Left colon (tissue), 2 donors: ENCODE measurements at regions of chr13 and their contacts with region 1.

Region 1: DNA sequence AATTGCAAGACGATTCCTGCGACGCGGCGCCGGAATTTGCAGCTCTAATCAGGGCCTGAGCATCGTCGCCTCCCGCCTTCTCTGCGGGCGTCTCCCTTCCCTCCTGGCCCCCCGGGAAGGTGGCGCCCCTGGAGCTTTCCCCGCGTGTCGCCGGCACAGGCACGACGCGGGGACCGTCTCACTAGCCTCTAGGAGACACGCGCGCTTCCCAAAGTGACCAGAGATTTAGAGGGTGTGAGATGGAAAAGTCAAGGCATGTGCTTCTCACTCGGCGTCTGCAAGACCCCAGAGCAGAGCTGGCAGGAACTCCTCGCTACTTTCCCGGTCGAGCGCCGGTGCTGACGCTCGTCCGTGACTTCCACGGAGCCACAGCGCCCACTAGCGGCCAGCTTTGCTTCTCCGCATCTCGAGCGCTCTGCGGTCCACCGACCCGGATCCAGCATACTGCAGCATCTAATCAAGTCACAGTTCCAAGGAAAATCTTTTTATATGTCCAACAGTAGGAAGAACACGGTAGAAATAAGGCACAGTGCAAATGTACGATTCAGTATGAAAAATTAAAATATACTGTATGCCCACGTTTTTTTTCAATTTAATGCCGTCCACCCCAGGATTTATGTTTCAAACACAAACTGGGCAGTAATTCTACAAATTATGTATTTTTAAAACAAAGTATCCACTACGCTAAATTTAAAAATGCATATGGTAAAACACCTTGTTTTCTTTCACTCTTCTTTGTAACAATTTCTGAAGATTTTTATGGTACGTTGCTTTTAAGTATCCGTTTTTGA is 977 bp upstream of the EFNB2 start:
- DNase-seq: peak; percentile 84 to 97
- ATAC-seq: peak; percentile 56

Region 2: DNA sequence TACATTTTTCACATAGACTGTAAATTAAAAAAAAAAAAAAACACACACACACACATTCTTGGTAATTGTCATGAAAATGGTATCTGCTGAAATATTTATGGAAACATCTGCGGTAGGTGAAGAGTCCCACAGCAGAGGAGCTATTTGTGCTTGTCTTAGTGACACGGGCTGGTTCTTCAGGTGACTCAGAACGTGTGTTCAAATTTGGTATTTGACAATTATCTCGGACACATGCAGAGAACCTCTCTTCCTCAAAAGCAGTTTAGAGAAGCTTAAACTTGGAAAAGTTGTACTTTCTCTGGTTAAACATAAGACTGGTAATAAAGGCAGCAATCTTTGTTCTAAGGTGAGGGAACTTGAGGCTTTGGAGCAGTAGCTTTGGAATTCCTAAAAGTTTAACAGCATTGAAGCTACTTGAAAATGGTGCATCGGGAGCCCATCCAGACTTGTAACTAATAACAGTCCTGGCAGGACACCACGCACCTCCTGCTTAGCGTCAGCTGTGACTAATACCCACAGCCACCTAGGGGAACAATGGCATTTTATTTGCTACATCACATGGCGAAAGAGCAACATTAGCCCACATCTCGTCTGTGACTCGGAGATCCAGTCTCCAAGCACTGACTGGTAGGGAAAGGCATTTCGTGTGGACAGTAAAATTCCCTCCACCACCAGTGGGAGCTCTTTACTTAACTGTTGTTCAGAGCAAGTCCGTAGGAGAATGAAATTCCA is 1965.1 kb before region 1 on chr13:
- intact Hi-C with region 1: loop called in 1 of 2 experiments (anchors 10 kb)
- DNase-seq: peak; percentile 62 to 69
- ATAC-seq: peak; percentile 93

Region 3: DNA sequence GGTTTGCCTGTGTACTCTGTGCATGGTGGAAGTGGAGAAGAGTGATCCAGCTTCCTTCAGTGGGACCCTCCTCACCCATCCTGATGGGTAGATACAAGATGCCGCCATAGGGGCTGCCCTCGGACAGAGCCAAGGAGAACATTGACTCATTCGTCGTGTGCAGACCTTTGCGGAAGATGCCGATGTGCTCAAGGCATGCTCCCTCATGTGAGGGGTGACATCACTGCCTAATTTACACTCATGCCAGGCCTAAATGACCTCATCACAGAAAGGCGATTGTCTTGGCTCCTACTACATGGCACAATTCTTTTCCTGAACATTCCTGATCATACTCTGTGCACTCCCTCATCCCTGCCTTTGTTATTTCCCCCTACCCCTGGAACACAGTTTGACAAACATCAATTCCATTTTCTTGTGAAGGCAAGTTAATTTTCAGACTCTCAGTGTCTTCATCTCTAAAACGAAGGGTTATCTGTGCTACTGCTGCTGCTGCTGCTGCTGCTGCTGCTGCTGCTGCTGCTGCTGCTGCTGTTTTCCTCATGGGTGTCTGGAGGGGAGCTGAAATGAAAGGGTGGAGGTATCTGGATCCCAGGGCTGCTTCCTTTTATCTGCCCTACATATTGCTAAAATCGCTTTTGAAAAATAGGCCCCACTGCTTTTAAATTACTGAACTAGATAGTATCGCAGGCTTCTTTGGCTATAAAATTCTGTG is 178.0 kb after region 1 on chr13:
- intact Hi-C with region 1: no loop called
- DNase-seq: no peak
- ATAC-seq: no peak